ENCODE measurements at regions of chr6 and their contacts with region 1.

Region 1: GRCh38 chr6:111406200-111406721 is 76.8 kb downstream of the REV3L start:
- DNase-seq: no peak
- ATAC-seq: peak; percentile 96
- H3K4me3 Mint-ChIP-seq: peak overlapping the region; percentile 47
- H3K27ac Mint-ChIP-seq: peak overlapping the region; percentile 90
- H3K4me1 Mint-ChIP-seq: peaks cover 36% of the 10 kb centered on the region
- H3K27me3 Mint-ChIP-seq: no peaks in the 10 kb centered on the region
- CTCF ChIP-seq: no peak

Region 2: DNA sequence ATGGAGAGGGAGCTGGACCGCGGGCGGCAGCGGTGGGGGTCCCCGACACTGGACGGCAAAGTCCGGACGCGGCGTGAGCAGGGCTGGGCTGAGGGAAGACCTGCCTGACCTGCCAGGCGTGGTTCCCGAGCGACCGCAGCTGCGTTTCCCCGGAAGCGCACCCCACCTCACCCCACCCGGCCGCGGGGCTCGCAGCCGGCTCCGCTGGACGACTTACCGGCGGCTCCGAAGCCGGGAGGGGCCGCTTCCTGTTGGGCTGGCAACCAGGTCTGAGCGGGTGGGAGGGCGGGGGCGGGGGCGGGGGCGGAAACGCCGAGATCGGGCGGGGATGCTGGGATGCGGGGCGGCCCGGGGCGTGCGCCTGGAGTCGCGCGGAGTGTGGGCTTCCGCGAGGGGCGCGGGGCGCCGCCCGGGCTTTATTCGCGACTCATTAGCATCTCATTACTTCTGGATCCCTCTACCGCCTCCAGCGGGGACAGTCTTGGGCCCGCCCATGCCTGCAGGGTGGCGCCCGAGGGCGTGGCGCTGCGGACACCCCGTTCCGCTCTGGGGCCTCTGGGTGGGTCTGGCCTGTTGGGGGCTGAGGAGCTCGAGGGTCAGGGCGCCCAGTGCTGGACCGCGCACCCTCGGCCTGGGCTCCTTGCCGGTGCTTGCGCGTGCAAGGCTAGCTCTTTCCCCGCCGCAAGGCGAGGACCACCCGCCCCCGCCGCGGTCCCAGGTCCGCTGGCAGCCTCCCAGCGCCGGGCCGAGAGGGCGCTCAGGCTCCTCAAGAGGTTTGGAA is 1950.6 kb before region 1 on chr6 and contains the start of gene MICAL1:
- CTCF ChIA-PET with region 1: no interaction called
- POLR2A ChIA-PET with region 1: no interaction called
- intact Hi-C with region 1: loop called (anchors 10 kb)
- DNase-seq: peak; percentile 82
- ATAC-seq: peak; percentile 58
- H3K4me3 Mint-ChIP-seq: peak within 1 kb of the TSS; percentile 97
- H3K27ac Mint-ChIP-seq: peak within 1 kb of the TSS; percentile 98
- H3K4me1 Mint-ChIP-seq: peaks cover 80% of the 10 kb centered on the region
- H3K27me3 Mint-ChIP-seq: no peaks in the 10 kb centered on the region
- CTCF ChIP-seq: no peak
- total RNA-seq, gene MICAL1: 104 and 120 TPM in 2 replicates

Region 3: DNA sequence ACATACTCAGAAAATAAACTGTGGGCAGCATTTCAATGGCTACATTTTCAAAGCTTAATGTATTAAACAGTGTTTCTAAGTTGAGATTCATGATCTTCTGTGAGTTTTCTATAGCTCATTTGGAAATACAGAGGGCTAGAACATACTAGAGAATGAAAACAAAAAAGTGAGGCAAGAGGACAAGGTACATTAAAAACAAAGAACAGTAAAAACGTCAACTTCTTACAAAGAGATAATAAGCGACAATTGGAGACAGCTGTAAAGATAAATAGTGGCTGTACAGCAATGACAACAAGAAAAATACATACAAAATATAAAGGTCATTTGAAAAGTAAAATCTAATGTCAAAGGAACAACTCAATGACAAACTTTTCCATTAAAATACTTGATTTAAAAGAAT is 17.6 kb before region 1 on chr6:
- CTCF ChIA-PET with region 1: no interaction called
- POLR2A ChIA-PET with region 1: interaction called, 6 read pairs
- intact Hi-C with region 1: loop called (anchors 2 kb)
- DNase-seq: no peak
- ATAC-seq: no peak
- H3K4me3 Mint-ChIP-seq: no peak overlapping the region
- H3K27ac Mint-ChIP-seq: no peak overlapping the region
- H3K4me1 Mint-ChIP-seq: peaks cover 3% of the 10 kb centered on the region
- H3K27me3 Mint-ChIP-seq: no peaks in the 10 kb centered on the region
- CTCF ChIP-seq: no peak

Region 4: GRCh38 chr6:111441678-111442243 is 35.5 kb after region 1 on chr6:
- CTCF ChIA-PET with region 1: no interaction called
- POLR2A ChIA-PET with region 1: no interaction called
- intact Hi-C with region 1: loop called (anchors 5 kb)
- DNase-seq: no peak
- ATAC-seq: peak; percentile 75
- H3K4me3 Mint-ChIP-seq: peak overlapping the region; percentile 71
- H3K27ac Mint-ChIP-seq: peak overlapping the region; percentile 83
- H3K4me1 Mint-ChIP-seq: peaks cover 29% of the 10 kb centered on the region
- H3K27me3 Mint-ChIP-seq: no peaks in the 10 kb centered on the region
- CTCF ChIP-seq: no peak

Region 5: DNA sequence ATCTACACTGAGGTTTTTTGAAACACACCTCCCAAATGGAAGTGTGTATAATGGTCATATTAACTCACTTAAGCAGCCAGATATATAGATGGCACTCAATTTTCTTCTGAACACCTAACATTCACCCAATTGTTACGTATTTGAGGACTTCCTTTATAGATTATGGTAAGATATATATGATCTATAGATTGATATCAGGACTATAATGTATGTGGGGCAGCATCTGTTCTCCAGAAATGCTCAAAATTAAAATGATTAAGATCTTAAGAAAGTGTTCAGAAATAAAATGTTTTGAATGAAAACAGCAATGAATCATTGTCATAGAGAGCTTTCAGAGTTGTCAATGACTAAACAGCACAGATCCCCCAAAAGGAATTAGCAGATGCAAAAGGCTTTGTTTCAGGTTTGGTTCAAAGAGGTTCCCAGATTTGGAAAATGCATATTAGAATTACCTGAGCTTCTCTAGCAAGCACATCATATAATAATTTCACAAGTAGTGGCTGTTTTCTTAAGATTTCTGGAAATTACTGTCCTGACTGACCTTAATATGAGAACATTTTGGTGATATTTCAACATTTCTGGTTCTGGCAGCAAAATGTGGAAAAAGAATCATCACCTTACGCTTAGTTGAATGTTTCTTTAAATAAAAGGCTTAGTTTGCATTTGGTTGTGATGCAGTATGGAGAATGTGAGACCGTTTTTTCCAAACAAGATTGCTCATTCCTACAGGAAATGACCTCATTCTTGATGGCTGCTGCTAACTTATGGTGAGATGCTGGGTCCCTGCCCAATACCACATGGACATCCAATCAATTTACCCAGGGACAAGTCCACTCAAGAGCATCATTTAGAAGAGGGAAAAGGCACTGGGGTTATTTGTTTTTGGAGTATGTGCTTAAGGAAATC is 167.9 kb after region 1 on chr6:
- CTCF ChIA-PET with region 1: no interaction called
- POLR2A ChIA-PET with region 1: no interaction called
- intact Hi-C with region 1: loop called (anchors 2 kb)
- DNase-seq: no peak
- ATAC-seq: no peak
- H3K4me3 Mint-ChIP-seq: no peak overlapping the region
- H3K27ac Mint-ChIP-seq: peak overlapping the region; percentile 79
- H3K4me1 Mint-ChIP-seq: peaks cover 24% of the 10 kb centered on the region
- H3K27me3 Mint-ChIP-seq: no peaks in the 10 kb centered on the region
- CTCF ChIP-seq: no peak